Gastrocnemius medialis (tissue), 4 donors: ENCODE measurements at regions of chr11 and their contacts with region 1.

Region 1: DNA sequence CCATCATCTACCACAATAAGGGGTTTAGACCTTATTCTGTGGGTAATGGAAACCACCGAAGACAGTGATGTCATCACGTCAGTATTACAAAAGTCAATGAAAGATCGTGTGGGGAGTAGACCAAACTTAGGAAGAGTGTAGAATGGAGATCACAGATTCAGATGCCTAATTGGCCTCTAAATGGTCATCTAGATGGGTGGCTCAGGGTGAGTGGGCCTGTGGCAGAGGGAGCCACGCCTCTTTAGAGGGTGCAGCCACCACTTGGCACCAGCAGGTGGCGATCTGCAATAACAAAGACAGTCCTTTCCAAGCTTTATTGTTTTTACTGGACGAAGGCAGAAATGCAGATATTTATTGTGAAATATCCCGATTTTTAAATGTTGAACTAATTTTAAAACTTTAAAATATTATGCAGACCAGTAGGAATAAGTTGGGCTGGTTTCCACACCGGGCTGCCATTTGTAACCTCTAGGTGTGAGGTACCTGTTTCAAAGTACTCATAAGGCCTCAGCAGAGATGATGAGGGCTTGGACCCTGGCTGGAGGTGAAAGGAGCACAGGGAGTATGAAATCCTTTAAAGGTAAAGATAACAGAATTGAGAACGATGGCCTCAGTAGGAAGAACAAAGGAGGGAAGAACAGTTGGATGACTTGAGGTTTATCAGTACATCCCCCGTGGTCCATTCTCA is 222.0 kb downstream of the DBX1 start:
- DNase-seq: no peak
- ATAC-seq: no peak
- H3K4me3 ChIP-seq: no peak overlapping the region
- H3K27ac ChIP-seq: no peak overlapping the region
- H3K4me1 ChIP-seq: no peaks in the 10 kb centered on the region
- H3K27me3 ChIP-seq: no peaks in the 10 kb centered on the region
- CTCF ChIP-seq: peak in 4 of 5 experiments; percentile 26 to 57 (median 42)
- POLR2A ChIP-seq: no peak

Region 2: DNA sequence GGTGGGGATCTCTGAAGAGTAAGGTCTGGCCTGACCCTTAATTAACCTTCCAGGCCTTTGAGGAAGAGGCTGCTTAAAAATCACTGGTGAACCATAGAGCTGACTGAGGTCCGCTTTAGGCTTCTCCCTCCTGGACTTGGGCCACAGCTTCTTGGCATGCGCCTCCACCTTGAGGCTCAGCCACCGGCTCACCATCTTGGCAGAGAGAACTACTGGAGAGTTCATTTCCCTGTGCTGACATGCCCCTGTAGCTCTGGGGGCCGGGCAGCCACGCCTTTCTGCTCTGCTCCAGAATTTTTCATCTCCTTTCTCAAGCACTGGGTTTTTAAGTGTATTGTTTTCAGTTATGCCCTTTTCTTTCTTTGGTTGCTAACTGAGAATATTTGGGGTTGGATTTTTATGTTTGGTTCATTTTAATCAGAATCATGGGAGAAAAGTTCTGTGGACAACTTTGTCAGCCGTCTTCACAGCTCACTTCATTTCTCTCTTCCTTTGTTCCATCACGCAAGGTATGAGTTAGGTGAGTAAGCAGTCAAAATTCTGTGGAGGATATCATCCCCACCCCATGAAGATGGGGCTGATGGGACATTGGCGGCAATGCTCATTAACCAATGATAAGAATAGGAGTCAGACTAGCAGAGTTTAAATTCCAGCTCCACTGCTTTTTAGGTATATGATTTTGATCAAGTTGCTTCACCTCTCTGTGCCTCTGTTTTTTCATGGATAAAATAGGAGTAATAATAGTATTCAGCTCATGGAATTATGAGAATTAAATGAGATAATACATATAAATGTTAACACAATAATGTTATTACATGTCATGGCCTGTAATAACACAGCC is 118.0 kb after region 1 on chr11:
- in situ Hi-C with region 1: no loop called
- intact Hi-C with region 1: no loop called
- DNase-seq: peak; percentile 58
- ATAC-seq: peak; percentile 54 to 74
- H3K4me3 ChIP-seq: no peak overlapping the region
- H3K27ac ChIP-seq: peak overlapping the region; percentile 67 to 87 (median 79)
- H3K4me1 ChIP-seq: peaks cover 34 to 45% of the 10 kb centered on the region in 2 donors
- H3K27me3 ChIP-seq: no peaks in the 10 kb centered on the region
- CTCF ChIP-seq: no peak
- POLR2A ChIP-seq: no peak

Region 3: GRCh38 chr11:20337526-20338154 is 399.3 kb after region 1 on chr11:
- in situ Hi-C with region 1: loop called in 1 of 4 experiments (anchors 25 kb)
- intact Hi-C with region 1: no loop called
- DNase-seq: no peak
- ATAC-seq: no peak
- H3K4me3 ChIP-seq: no peak overlapping the region
- H3K27ac ChIP-seq: no peak overlapping the region
- H3K4me1 ChIP-seq: no peaks in the 10 kb centered on the region
- H3K27me3 ChIP-seq: peaks cover 4 to 12% (median 7%) of the 10 kb centered on the region in 3 donors
- CTCF ChIP-seq: no peak
- POLR2A ChIP-seq: no peak